Activated T-helper 1 cell treated with anti-CD3 and anti-CD28 coated beads, Interleukin-12 subunit alpha, Interleukin-12 subunit beta, Interleukin-2, Interleukin-4 antibody, amounts not matched to agents 30 ng/mL and 10 ng/mL and 1 ng/mL, durations not matched to agents 14 hours and 24 hours and 36 hours (primary cell): ENCODE measurements at regions of chr22 and their contacts with region 1.

Region 1: DNA sequence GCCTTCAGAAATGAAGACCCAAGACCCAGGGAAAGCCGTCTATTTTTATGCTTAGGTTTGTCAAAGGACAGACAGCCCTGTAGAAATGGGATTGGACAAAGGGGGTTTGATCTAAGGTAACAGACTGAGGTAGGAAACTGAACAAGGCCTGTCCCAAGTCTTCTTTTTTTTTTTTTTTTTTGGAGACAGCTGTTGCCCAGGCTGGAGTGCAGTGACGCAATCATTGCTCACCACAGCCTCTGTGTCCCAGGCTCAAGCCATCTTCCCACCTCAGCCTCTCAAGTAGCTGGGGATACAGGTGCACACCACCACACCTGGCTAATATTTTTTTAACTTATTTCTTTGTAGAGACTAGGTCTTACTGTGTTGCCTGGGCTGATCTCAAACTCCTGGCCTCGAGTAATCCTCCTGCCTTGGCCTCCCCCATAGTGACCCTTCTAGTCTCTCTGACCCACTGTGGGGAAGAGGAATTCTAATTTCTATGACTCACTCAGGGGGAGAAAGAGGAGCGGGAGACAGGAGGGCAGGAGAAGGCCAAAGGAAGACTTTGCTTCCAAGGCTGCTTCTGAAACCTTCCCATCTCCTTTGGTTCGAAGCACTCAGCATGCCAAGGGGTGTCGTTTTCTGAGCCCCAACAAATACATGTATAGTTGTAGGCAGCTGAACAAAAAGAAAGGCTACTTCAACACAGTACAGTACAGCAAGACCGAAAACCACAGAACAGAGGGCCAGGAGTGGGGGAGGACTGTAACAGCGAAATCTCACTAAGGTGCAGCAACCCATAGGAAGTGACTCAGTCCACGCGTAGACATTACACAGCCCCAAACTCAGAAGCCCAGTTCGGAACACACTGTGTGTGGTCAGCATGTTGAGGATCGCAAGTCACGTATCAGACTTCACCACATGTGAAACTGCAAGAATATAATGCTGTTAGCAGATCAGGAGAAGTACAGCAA is 872 bp downstream of the TMA7B start:
- DNase-seq: peak; percentile 71
- H3K4me3 Mint-ChIP-seq: peak overlapping the region; percentile 73
- H3K27ac Mint-ChIP-seq: peak overlapping the region; percentile 92
- H3K4me1 Mint-ChIP-seq: peaks cover 54% of the 10 kb centered on the region
- H3K27me3 Mint-ChIP-seq: no peaks in the 10 kb centered on the region

Region 2: DNA sequence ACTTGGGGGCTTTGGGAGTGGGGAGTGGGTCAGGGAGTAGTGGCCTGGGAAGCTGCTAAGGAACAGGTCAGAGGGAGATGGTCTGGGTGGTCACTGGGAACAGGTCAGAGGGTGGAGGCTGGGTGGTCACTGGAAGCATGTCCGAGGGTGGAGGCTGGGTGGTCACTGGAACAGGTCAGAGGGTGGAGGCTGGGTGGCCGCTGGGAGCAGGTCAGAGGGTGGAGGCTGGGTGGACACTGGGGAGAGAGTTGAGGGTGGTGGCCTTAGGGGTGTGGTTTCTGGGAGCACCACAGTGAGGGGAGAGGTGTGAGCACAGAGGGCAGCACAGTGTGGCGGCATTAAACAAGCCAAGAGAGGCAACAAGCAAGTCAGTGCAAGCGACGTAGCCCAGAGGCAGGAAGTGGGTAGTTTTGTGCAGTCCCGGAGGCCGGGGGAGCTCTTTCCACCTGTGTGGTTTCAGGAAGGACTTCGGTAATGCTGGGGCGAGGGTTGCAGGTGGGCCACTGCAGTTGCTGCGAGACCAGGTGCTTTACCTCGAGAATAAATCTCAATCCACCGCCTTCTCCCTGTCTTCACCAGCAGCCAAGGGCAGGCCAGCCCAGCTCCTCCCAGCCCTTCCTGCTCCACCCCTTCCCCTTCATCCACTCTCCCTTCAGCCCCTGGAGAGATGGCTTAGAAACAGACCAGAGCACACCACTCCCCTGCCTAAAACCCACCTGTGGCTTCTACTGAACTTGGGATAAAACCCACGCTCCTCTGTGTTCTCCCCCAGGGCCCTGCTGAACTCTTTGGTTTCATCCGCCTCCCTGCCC is 393.7 kb before region 1 on chr22:
- intact Hi-C with region 1: no loop called
- DNase-seq: peak; percentile 31
- H3K4me3 Mint-ChIP-seq: no peak overlapping the region
- H3K27ac Mint-ChIP-seq: no peak overlapping the region
- H3K4me1 Mint-ChIP-seq: peaks cover 13% of the 10 kb centered on the region
- H3K27me3 Mint-ChIP-seq: no peaks in the 10 kb centered on the region

Region 3: GRCh38 chr22:39773976-39774539 is 187.0 kb before region 1 on chr22:
- intact Hi-C with region 1: loop called (anchors 1 kb)
- DNase-seq: peak; percentile 64
- H3K4me3 Mint-ChIP-seq: peak overlapping the region; percentile 19
- H3K27ac Mint-ChIP-seq: peak overlapping the region; percentile 64
- H3K4me1 Mint-ChIP-seq: peaks cover 60% of the 10 kb centered on the region
- H3K27me3 Mint-ChIP-seq: no peaks in the 10 kb centered on the region

Region 4: GRCh38 chr22:39900306-39901227 is 60.5 kb before region 1 on chr22 and contains the start of gene GRAP2:
- intact Hi-C with region 1: loop called (anchors 1 kb)
- DNase-seq: peak; percentile 77
- H3K4me3 Mint-ChIP-seq: peak within 1 kb of the TSS; percentile 93
- H3K27ac Mint-ChIP-seq: peak within 1 kb of the TSS; percentile 95
- H3K4me1 Mint-ChIP-seq: peaks cover 47% of the 10 kb centered on the region
- H3K27me3 Mint-ChIP-seq: no peaks in the 10 kb centered on the region
- total RNA-seq, gene GRAP2: 30.5 and 31.3 TPM in 2 replicates

Region 5: GRCh38 chr22:39908737-39909136 is 52.3 kb before region 1 on chr22:
- intact Hi-C with region 1: loop called (anchors 1 kb)
- DNase-seq: no peak
- H3K4me3 Mint-ChIP-seq: peak overlapping the region; percentile 92
- H3K27ac Mint-ChIP-seq: peak overlapping the region; percentile 96
- H3K4me1 Mint-ChIP-seq: peaks cover 95% of the 10 kb centered on the region
- H3K27me3 Mint-ChIP-seq: no peaks in the 10 kb centered on the region

Region 6: GRCh38 chr22:39927544-39927943 is 33.5 kb before region 1 on chr22:
- intact Hi-C with region 1: loop called (anchors 5 kb)
- DNase-seq: no peak
- H3K4me3 Mint-ChIP-seq: no peak overlapping the region
- H3K27ac Mint-ChIP-seq: no peak overlapping the region
- H3K4me1 Mint-ChIP-seq: peaks cover 37% of the 10 kb centered on the region
- H3K27me3 Mint-ChIP-seq: no peaks in the 10 kb centered on the region

Region 7: DNA sequence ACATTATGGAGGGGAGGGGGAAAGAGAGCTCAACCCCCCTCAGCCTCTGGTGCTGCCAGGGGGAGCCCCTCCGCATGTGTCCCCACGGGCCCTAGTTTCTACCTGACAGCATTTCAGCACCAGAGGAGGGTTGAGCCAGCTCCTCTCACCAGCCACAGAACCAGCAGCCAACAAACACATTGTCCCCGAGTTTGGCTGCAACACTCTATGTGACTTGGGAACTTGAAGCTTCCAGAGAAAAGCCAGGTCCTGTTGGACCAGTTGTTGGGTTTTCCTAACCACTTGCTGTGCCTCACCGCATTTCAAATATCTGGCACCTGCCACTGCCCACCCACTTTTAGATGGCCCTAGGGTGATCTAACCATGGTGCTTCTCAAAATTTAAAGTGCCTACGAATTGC is 12.6 kb after region 1 on chr22:
- intact Hi-C with region 1: no loop called
- DNase-seq: no peak
- H3K4me3 Mint-ChIP-seq: no peak overlapping the region
- H3K27ac Mint-ChIP-seq: no peak overlapping the region
- H3K4me1 Mint-ChIP-seq: no peaks in the 10 kb centered on the region
- H3K27me3 Mint-ChIP-seq: no peaks in the 10 kb centered on the region

Region 8: GRCh38 chr22:40009292-40009769 is 48.3 kb after region 1 on chr22:
- intact Hi-C with region 1: no loop called
- DNase-seq: no peak
- H3K4me3 Mint-ChIP-seq: no peak overlapping the region
- H3K27ac Mint-ChIP-seq: no peak overlapping the region
- H3K4me1 Mint-ChIP-seq: no peaks in the 10 kb centered on the region
- H3K27me3 Mint-ChIP-seq: peaks cover 19% of the 10 kb centered on the region